ENCODE measurements at regions of chr12 and their contacts with region 1.

Region 1: GRCh38 chr12:107884769-107885694 is 110.5 kb downstream of the ASCL4 start:
- DNase-seq: peak in 2 of 3 donors; percentile 50 to 58
- ATAC-seq: peak; percentile 83
- H3K4me3 ChIP-seq: no peak overlapping the region
- H3K4me1 ChIP-seq: no peaks in the 10 kb centered on the region
- CTCF ChIP-seq: peak; percentile 30

Region 2: GRCh38 chr12:107655281-107656065 is 229.6 kb before region 1 on chr12:
- intact Hi-C with region 1: no loop called
- DNase-seq: peak in 2 of 3 donors; percentile 33 to 52
- ATAC-seq: peak; percentile 52
- H3K4me3 ChIP-seq: no peak overlapping the region
- H3K4me1 ChIP-seq: peaks cover 5% of the 10 kb centered on the region
- CTCF ChIP-seq: no peak

Region 3: GRCh38 chr12:107670999-107671643 is 213.9 kb before region 1 on chr12:
- intact Hi-C with region 1: loop called in 1 of 2 experiments (anchors 10 kb)
- DNase-seq: peak in 2 of 3 donors; percentile 36 to 39
- ATAC-seq: peak; percentile 67
- H3K4me3 ChIP-seq: no peak overlapping the region
- H3K4me1 ChIP-seq: no peaks in the 10 kb centered on the region
- CTCF ChIP-seq: peak; percentile 23

Measured in mucosa of descending colon (tissue), 3 donors.